ENCODE measurements at regions of chr4 and their contacts with region 1.

Region 1: GRCh38 chr4:101347557-101348366 is 436 bp upstream of the PPP3CA start:
- DNase-seq: peak; percentile 99 to 100 (median 100)

Region 2: GRCh38 chr4:101114936-101115372 is 232.8 kb before region 1 on chr4:
- intact Hi-C with region 1: loop called (anchors 10 kb)
- DNase-seq: peak in 1 of 10 donors; percentile 24

Region 3: GRCh38 chr4:101187841-101188240 is 159.9 kb before region 1 on chr4:
- intact Hi-C with region 1: loop called (anchors 5 kb)
- DNase-seq: no peak